Tibial artery (tissue), 4 donors: ENCODE measurements at regions of chrX and their contacts with region 1.

Region 1: DNA sequence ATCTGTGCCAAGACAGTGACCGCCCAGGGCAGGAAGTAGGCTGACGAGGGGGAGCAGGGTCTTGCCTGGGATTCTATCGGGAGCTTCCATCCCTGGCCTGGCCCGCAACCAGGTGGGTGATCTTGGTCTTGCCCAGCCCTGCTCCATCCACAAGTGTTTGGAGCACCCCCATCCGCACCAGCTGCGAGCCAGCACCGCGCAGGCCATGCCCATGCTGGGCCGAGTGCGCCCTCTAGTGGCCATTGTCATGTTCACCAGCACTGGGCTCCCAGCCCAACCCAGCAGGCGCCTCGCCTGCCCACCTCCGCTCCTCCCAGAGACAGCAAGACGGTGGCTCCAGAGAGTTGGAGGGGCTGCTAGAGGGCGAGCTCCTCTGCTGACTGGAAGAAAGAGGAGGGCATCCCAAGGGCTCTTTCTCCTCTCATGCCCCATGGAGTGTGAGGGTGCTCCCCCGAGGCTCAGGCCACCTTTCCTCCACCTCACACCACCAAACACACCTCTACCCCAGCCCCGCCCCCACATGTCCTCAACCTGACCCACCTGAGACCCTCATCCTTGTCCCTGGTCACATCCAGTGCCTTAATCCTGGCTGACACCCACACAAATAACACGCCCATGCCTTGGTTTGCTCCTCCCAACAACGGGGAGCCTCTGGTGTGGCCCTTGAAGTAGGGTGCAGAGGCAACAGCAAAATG is 9.8 kb upstream of the ATP2B3 start:
- DNase-seq: peak; percentile 78 to 89
- H3K4me3 ChIP-seq: no peak overlapping the region
- H3K27ac ChIP-seq: peak overlapping the region in 1 of 2 donors; percentile 39
- H3K4me1 ChIP-seq: peaks cover 0 to 32% (median 17%) of the 10 kb centered on the region in 4 donors
- H3K27me3 ChIP-seq: no peaks in the 10 kb centered on the region
- CTCF ChIP-seq: peak; percentile 80 to 83

Region 2: GRCh38 chrX:153397256-153397960 is 110.2 kb before region 1 on chrX:
- intact Hi-C with region 1: no loop called
- DNase-seq: no peak
- H3K4me3 ChIP-seq: no peak overlapping the region
- H3K27ac ChIP-seq: no peak overlapping the region
- H3K4me1 ChIP-seq: no peaks in the 10 kb centered on the region
- H3K27me3 ChIP-seq: peaks cover 0 to 16% of the 10 kb centered on the region in 2 donors
- CTCF ChIP-seq: no peak

Region 3: DNA sequence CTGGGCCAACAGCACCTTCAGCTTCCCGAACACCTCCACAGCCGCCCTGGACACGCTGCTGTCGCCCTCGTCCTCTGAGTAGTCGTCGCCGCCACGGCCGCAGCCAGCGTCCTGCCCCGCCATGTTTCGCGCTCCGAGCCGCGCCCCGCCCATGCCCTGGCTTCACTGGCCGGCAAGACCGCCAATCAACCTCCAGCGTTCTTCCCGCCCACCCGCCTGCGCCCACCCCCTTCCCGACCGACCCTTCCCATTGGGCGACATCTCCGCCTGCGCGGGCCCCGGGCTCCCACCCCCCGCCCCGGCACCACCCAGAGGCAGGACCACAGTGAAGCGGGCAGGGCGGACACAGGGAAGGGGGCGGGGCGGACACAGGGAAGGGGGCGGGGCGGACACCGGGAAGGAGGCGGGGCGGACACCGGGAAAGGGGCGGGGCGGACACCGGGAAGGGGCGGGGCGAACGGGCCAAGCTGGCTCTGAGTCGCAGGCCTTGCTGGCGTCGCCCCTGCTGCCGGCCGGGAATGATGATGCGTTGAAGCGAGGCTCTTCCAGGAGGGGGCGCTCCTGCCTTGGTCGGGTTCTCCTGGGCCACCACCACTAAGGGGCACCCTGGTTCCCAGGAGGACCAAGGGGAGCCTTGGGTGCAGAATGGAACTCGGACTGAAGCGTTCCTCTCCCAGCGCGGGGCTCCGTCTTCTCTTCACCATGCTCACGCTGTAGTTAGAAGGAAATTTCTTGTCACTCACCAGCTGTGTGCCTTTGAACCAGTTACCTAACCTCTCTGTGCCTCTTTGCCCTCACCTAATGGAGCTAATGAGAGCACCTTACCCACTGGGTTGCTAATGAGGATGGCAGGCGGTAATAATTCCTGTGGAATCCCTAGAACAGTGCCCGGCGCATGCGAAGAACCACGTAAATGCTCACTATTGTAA is 36.9 kb before region 1 on chrX and contains the start of gene HAUS7:
- intact Hi-C with region 1: loop called (anchors 5 kb)
- DNase-seq: peak; percentile 83 to 93
- H3K4me3 ChIP-seq: peak within 1 kb of the TSS; percentile 58 to 69
- H3K27ac ChIP-seq: peak within 1 kb of the TSS; percentile 64 to 80
- H3K4me1 ChIP-seq: peaks cover 0 to 55% (median 22%) of the 10 kb centered on the region in 4 donors
- H3K27me3 ChIP-seq: no peaks in the 10 kb centered on the region
- CTCF ChIP-seq: peak; percentile 67 to 70

Region 4: GRCh38 chrX:153554519-153555167 is 47.0 kb after region 1 on chrX:
- intact Hi-C with region 1: no loop called
- DNase-seq: peak; percentile 51 to 70
- H3K4me3 ChIP-seq: no peak overlapping the region
- H3K27ac ChIP-seq: no peak overlapping the region
- H3K4me1 ChIP-seq: no peaks in the 10 kb centered on the region
- H3K27me3 ChIP-seq: no peaks in the 10 kb centered on the region
- CTCF ChIP-seq: peak; percentile 45 to 55